ENCODE measurements at regions of chrX and their contacts with region 1.

Region 1: GRCh38 chrX:56232221-56233082 is at the start of gene KLF8:
- H3K4me3 Mint-ChIP-seq: peak within 1 kb of the TSS; percentile 80
- H3K27ac Mint-ChIP-seq: peak within 1 kb of the TSS; percentile 77
- H3K4me1 Mint-ChIP-seq: peaks cover 32% of the 10 kb centered on the region
- H3K27me3 Mint-ChIP-seq: peaks cover 26% of the 10 kb centered on the region

Region 2: DNA sequence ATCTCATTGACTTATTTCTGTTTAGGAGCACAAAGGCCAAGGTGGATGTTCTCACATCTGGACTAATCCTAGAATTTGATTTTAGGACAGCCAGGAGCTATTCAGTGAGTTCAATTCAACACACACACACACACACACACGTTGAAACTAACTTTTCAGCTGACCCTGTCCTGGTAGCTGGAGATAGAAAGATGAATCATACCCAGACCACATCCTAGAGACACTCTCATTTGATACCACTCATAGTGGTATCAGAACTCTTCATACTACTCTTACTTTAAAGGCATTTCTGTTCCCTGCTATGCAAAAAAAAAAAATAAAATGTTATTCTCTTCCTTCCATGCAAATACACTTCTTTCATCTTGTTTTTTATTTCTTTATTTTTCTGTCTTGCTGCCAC is 36.4 kb after region 1 on chrX:
- intact Hi-C with region 1: no loop called
- H3K4me3 Mint-ChIP-seq: no peak overlapping the region
- H3K27ac Mint-ChIP-seq: no peak overlapping the region
- H3K4me1 Mint-ChIP-seq: no peaks in the 10 kb centered on the region
- H3K27me3 Mint-ChIP-seq: no peaks in the 10 kb centered on the region

Region 3: GRCh38 chrX:56729152-56729850 is 496.8 kb after region 1 on chrX and contains the start of gene NBDY:
- intact Hi-C with region 1: loop called (anchors 5 kb)
- H3K4me3 Mint-ChIP-seq: peak within 1 kb of the TSS; percentile 86
- H3K27ac Mint-ChIP-seq: peak within 1 kb of the TSS; percentile 85
- H3K4me1 Mint-ChIP-seq: peaks cover 5% of the 10 kb centered on the region
- H3K27me3 Mint-ChIP-seq: no peaks in the 10 kb centered on the region

Measured in dendritic cell treated with granulocyte-macrophage colony-stimulating factor and Interleukin-4, amounts not matched to agents 40 ng/mL and 50 ng/mL, for 4 days (primary cell).